Sigmoid colon (tissue), 7 donors: ENCODE measurements at regions of chr5 and their contacts with region 1.

Region 1: GRCh38 chr5:167244583-167244982 is 1046.9 kb upstream of the WWC1 start:
- DNase-seq: no peak
- H3K4me3 ChIP-seq: no peak overlapping the region
- H3K27ac ChIP-seq: no peak overlapping the region
- H3K4me1 ChIP-seq: no peaks in the 10 kb centered on the region
- H3K27me3 ChIP-seq: no peaks in the 10 kb centered on the region
- CTCF ChIP-seq: peak in 1 of 4 experiments; percentile 46
- EP300 ChIP-seq: no peak
- POLR2A ChIP-seq: no peak

Region 2: GRCh38 chr5:165630261-165630778 is 1614.3 kb before region 1 on chr5:
- intact Hi-C with region 1: loop called (anchors 10 kb)
- DNase-seq: peak; percentile 64
- H3K4me3 ChIP-seq: no peak overlapping the region
- H3K27ac ChIP-seq: no peak overlapping the region
- H3K4me1 ChIP-seq: no peaks in the 10 kb centered on the region
- H3K27me3 ChIP-seq: no peaks in the 10 kb centered on the region
- CTCF ChIP-seq: peak; percentile 23 to 72 (median 50)
- EP300 ChIP-seq: no peak
- POLR2A ChIP-seq: no peak

Region 3: DNA sequence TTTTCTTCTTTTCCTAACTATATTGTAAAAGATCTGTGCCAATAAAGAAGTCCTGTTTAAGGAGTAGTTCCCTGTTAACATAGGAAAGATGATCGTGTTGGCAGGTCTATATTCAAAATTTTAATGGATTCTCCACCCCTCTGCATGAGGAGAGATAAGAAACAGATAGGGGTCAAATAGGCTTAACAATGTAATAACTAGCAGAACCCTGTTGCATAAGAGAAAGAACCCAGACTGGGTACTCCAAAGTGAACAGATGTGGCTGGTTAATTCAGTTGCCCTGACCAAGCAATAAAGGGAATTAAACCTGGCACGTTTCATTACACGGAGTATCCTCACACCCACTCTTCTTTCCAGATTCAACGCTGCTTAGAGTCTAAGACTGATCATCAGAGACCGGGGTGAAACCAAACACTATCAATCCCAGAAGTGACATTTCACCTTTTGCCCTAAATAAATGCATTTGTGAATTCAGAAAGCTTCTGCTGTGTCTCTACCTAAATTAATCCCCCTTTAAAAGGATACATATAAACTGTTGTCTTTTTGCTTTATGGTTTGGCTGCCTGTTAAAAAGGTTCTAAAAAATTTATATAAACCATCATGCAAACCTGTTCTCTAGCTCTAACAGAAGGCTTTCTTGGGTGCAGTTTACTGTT is 230.1 kb before region 1 on chr5:
- intact Hi-C with region 1: no loop called
- DNase-seq: no peak
- H3K4me3 ChIP-seq: no peak overlapping the region
- H3K27ac ChIP-seq: peak overlapping the region in 3 of 4 donors; percentile 43 to 61 (median 59)
- H3K4me1 ChIP-seq: peaks cover 0 to 10% (median 0%) of the 10 kb centered on the region in 4 donors
- H3K27me3 ChIP-seq: no peaks in the 10 kb centered on the region
- CTCF ChIP-seq: no peak
- EP300 ChIP-seq: peak in 1 of 4 donors; percentile 8
- POLR2A ChIP-seq: no peak